ENCODE measurements at regions of chr15 and their contacts with region 1.

Region 1: DNA sequence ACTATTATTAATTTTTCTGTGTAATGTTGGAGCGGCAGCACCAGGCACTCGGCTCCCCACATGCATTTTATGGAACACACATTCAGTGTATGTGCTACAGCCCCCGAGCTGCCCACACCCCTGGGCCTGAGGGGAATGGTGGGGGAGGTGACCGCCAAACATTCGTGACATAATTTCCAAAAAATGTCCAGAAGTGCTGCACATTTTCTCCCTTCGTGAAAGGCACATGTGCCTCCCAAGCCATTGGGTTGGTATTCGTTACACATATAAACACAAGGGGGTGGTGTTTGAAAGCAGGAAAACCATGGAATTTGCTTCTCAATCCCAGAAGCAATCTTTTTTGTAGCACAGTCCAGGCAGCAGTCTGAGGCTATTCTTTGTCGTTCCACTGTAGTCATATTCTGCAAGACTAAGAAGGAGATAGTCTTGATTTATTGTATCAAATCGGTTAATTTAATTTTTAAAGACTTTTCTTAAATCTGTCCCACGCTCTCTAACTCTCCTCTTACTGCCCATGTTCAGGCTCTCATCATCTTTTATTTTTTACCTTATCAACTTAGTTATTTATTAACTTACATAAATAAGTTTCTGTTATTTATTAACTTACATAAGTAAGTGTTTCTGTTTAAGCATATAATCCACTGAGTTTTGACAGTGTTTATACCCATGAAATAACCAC is 39.2 kb upstream of the POLR2M start:
- DNase-seq: no peak
- ATAC-seq: peak; percentile 63

Region 2: GRCh38 chr15:57732526-57733331 is 65.4 kb after region 1 on chr15:
- intact Hi-C with region 1: loop called (anchors 5 kb)
- DNase-seq: peak; percentile 49
- ATAC-seq: peak; percentile 65